Activated CD4-positive, alpha-beta memory T cell treated with anti-CD3 and anti-CD28 coated beads, Interleukin-2, amount 10 ng/mL, durations not matched to agents 7 days and 5 days (primary cell): ENCODE measurements at regions of chr13 and their contacts with region 1.

Region 1: GRCh38 chr13:31909864-31910551 is 121.6 kb upstream of the FRY start:
- DNase-seq: peak; percentile 56
- H3K4me3 Mint-ChIP-seq: no peak overlapping the region
- H3K27ac Mint-ChIP-seq: no peak overlapping the region
- H3K4me1 Mint-ChIP-seq: peaks cover 36% of the 10 kb centered on the region
- H3K27me3 Mint-ChIP-seq: no peaks in the 10 kb centered on the region

Region 2: DNA sequence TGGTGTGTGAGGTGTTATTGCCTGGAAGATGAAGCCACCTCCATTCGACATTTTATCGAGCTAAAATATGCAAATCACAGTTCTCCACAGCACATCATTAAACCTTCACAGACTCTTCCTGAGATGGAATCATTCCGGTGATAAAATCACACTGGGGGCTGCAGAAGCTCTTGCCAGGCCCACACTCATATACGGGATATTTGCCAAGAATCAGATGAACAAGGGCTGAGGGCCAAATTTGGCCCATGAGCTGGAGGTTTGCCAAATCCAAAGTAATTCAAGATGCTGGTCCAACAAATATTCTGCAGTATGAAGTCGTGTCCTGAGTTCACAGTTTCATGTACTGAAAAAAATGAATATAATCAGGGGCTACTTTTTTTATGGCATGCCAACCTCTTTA is 187.3 kb before region 1 on chr13:
- CTCF ChIA-PET with region 1: no interaction called
- POLR2A ChIA-PET with region 1: no interaction called
- DNase-seq: no peak
- H3K4me3 Mint-ChIP-seq: no peak overlapping the region
- H3K27ac Mint-ChIP-seq: no peak overlapping the region
- H3K4me1 Mint-ChIP-seq: no peaks in the 10 kb centered on the region
- H3K27me3 Mint-ChIP-seq: peaks cover 15% of the 10 kb centered on the region

Region 3: DNA sequence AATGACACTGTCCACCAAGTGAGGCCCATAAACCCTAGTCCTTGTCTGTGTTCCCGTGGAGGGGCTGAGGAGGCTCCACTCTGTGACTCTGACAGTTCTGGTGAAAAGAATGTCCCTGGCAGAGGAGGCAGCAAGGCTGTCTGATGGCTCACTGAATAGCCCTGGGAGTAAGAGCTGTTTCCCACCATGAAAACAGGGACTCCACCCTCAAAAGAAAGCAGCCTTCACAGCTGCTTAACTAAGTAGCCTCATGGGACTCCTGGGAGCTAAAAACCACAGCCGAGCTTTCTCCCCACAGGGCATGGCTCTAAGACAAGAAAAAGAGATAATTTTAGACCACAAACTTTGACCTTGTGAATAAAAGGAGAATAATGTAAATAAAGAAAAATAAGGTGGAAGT is 13.6 kb before region 1 on chr13:
- CTCF ChIA-PET with region 1: interaction called, 26 read pairs
- POLR2A ChIA-PET with region 1: interaction called, 3 read pairs
- DNase-seq: no peak
- H3K4me3 Mint-ChIP-seq: no peak overlapping the region
- H3K27ac Mint-ChIP-seq: no peak overlapping the region
- H3K4me1 Mint-ChIP-seq: peaks cover 36% of the 10 kb centered on the region
- H3K27me3 Mint-ChIP-seq: peaks cover 7% of the 10 kb centered on the region

Region 4: GRCh38 chr13:31930901-31931522 is 21.0 kb after region 1 on chr13:
- CTCF ChIA-PET with region 1: interaction called, 56 read pairs
- POLR2A ChIA-PET with region 1: interaction called, 7 read pairs
- DNase-seq: peak; percentile 50
- H3K4me3 Mint-ChIP-seq: no peak overlapping the region
- H3K27ac Mint-ChIP-seq: no peak overlapping the region
- H3K4me1 Mint-ChIP-seq: peaks cover 38% of the 10 kb centered on the region
- H3K27me3 Mint-ChIP-seq: no peaks in the 10 kb centered on the region

Region 5: GRCh38 chr13:32164622-32165268 is 254.7 kb after region 1 on chr13:
- CTCF ChIA-PET with region 1: interaction called, 28 read pairs
- POLR2A ChIA-PET with region 1: no interaction called
- DNase-seq: peak; percentile 19
- H3K4me3 Mint-ChIP-seq: no peak overlapping the region
- H3K27ac Mint-ChIP-seq: no peak overlapping the region
- H3K4me1 Mint-ChIP-seq: peaks cover 4% of the 10 kb centered on the region
- H3K27me3 Mint-ChIP-seq: no peaks in the 10 kb centered on the region

Region 6: GRCh38 chr13:32310134-32310706 is 400.2 kb after region 1 on chr13:
- CTCF ChIA-PET with region 1: interaction called, 17 read pairs
- POLR2A ChIA-PET with region 1: interaction called, 14 read pairs
- DNase-seq: peak; percentile 28
- H3K4me3 Mint-ChIP-seq: no peak overlapping the region
- H3K27ac Mint-ChIP-seq: no peak overlapping the region
- H3K4me1 Mint-ChIP-seq: peaks cover 28% of the 10 kb centered on the region
- H3K27me3 Mint-ChIP-seq: no peaks in the 10 kb centered on the region